Activated T-helper 1 cell treated with anti-CD3 and anti-CD28 coated beads, Interleukin-12 subunit alpha, Interleukin-12 subunit beta, Interleukin-2, Interleukin-4 antibody, amounts not matched to agents 30 ng/mL and 10 ng/mL and 1 ng/mL, durations not matched to agents 14 hours and 24 hours and 36 hours (primary cell): ENCODE measurements at regions of chr19 and their contacts with region 1.

Region 1: GRCh38 chr19:15418588-15419412 is at the start of gene AKAP8L:
- DNase-seq: peak; percentile 98
- H3K4me3 Mint-ChIP-seq: peak within 1 kb of the TSS; percentile 98
- H3K27ac Mint-ChIP-seq: peak within 1 kb of the TSS; percentile 89
- H3K4me1 Mint-ChIP-seq: peaks cover 18% of the 10 kb centered on the region
- H3K27me3 Mint-ChIP-seq: no peaks in the 10 kb centered on the region
- total RNA-seq, gene AKAP8L: 73.8 and 77.9 TPM in 2 replicates

Region 2: GRCh38 chr19:14571695-14572490 is 846.9 kb before region 1 on chr19 and contains the start of gene NDUFB7:
- intact Hi-C with region 1: loop called (anchors 5 kb)
- DNase-seq: peak; percentile 90
- H3K4me3 Mint-ChIP-seq: peak within 1 kb of the TSS; percentile 97
- H3K27ac Mint-ChIP-seq: peak within 1 kb of the TSS; percentile 79
- H3K4me1 Mint-ChIP-seq: peaks cover 29% of the 10 kb centered on the region
- H3K27me3 Mint-ChIP-seq: no peaks in the 10 kb centered on the region
- total RNA-seq, gene NDUFB7: 131 and 133 TPM in 2 replicates

Region 3: GRCh38 chr19:15177269-15178116 is 241.3 kb before region 1 on chr19:
- intact Hi-C with region 1: loop called (anchors 1 kb)
- DNase-seq: peak; percentile 74
- H3K4me3 Mint-ChIP-seq: peak overlapping the region; percentile 13
- H3K27ac Mint-ChIP-seq: no peak overlapping the region
- H3K4me1 Mint-ChIP-seq: peaks cover 6% of the 10 kb centered on the region
- H3K27me3 Mint-ChIP-seq: peaks cover 6% of the 10 kb centered on the region

Region 4: DNA sequence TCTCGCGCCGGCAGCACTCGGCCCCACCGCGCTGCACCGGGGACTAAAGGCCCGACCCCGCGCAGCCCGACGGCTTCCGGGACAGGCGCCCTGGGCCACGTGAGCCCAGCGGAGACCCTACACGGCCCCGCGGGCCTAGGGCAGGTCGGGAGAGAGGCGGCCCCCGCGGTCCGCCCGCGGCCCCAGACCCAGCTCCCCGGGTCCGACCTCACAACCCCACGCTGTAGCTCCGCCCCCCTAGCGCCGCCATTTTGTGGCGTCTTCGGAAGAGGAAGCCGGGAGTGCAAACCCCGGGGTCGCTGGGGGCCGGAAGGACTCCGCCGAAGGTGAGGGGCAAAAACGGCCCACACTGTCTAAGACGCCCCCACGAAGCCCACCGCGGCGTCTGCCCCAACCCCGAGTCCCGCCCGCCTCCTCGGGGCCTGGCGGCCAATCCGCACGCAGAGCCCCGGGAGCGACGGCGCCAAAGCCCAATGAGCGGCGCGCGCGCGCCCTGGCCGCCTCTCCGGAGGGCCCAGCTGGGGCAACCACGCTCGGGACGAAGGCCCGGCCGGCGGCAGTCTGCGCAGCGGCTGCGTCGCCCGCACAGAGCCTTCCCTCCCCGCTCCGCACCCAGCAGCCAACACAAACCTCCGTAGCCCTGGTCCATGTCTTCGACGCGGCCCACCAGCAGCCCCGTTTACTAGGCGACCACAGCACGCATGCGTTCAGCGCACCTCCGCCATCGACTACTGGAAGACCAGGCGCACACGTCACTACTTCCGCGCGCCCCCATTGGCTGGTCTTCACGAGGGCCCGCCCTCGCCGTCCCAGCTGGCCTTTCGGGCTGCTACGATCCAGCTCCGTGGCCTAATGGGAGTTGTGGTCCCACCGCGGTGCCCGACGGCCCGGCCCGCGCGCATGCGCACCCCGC is 39.5 kb before region 1 on chr19 and contains the start of gene AKAP8:
- intact Hi-C with region 1: loop called (anchors 1 kb)
- DNase-seq: peak; percentile 98
- H3K4me3 Mint-ChIP-seq: peak within 1 kb of the TSS; percentile 98
- H3K27ac Mint-ChIP-seq: peak within 1 kb of the TSS; percentile 100
- H3K4me1 Mint-ChIP-seq: peaks cover 35% of the 10 kb centered on the region
- H3K27me3 Mint-ChIP-seq: no peaks in the 10 kb centered on the region
- total RNA-seq, gene AKAP8: 52.7 and 57.5 TPM in 2 replicates

Region 5: GRCh38 chr19:15449620-15450527 is 31.1 kb after region 1 on chr19 and contains the start of gene WIZ:
- intact Hi-C with region 1: loop called (anchors 1 kb)
- DNase-seq: peak; percentile 74
- H3K4me3 Mint-ChIP-seq: peak within 1 kb of the TSS; percentile 86
- H3K27ac Mint-ChIP-seq: peak within 1 kb of the TSS; percentile 98
- H3K4me1 Mint-ChIP-seq: peaks cover 32% of the 10 kb centered on the region
- H3K27me3 Mint-ChIP-seq: peaks cover 3% of the 10 kb centered on the region
- total RNA-seq, gene WIZ: 37.6 and 38.7 TPM in 2 replicates